AG04450 (cell line): ENCODE measurements at regions of chrX and their contacts with region 1.

Region 1: GRCh38 chrX:19334945-19335626 is 8.6 kb upstream of the PDHA1 start:
- DNase-seq: no peak
- H3K4me3 ChIP-seq: no peak overlapping the region
- H3K27ac ChIP-seq: no peak overlapping the region
- H3K27me3 ChIP-seq: no peaks in the 10 kb centered on the region
- CTCF ChIP-seq: peak; percentile 15; the same call in 1 of the 2 replicates

Region 2: DNA sequence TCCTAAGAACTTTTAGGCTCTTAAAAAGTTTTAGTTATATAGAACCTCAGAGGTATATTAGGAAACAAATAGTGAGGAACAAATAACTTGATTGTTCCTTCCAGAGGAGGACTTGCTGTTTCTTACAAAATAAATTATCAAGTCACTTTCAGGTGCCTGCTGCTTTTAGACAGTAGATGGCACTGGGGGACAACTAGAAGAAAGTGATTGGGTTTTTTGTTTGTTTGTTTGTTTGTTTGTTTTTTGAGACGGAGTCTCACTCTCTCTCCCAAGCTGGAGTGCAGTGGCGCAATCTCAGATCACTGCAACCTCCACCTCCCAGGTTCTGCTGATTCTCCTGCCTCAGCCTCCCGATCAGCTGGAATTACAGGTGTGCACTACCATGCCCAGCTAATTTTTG is 945.1 kb before region 1 on chrX:
- CTCF ChIA-PET with region 1: interaction called, 19 read pairs
- POLR2A ChIA-PET with region 1: no interaction called
- DNase-seq: no peak
- H3K4me3 ChIP-seq: no peak overlapping the region
- H3K27ac ChIP-seq: no peak overlapping the region
- H3K27me3 ChIP-seq: no peaks in the 10 kb centered on the region
- CTCF ChIP-seq: no peak

Region 3: DNA sequence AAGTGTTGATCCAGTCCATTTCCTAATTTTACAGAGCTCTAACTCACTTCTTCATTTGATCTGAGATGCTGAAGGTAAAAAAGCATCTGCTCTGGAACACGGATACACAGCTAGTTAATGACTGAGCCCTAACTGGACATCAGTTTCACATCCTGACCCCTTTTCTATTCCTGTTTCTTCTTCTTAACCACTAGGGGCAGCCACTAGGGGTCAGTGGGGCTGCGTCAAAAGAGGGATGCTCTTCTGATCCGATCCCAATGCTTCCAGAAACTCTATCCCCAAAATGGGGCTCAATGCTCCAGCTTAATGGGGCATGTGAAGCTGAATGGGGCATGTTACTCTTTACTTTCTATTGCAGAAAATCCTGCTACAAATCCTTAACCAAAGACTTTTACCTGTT is 317.8 kb before region 1 on chrX:
- CTCF ChIA-PET with region 1: interaction called, 16 read pairs
- POLR2A ChIA-PET with region 1: no interaction called
- DNase-seq: no peak
- H3K4me3 ChIP-seq: no peak overlapping the region
- H3K27ac ChIP-seq: no peak overlapping the region
- H3K27me3 ChIP-seq: no peaks in the 10 kb centered on the region
- CTCF ChIP-seq: peak; percentile 60

Region 4: DNA sequence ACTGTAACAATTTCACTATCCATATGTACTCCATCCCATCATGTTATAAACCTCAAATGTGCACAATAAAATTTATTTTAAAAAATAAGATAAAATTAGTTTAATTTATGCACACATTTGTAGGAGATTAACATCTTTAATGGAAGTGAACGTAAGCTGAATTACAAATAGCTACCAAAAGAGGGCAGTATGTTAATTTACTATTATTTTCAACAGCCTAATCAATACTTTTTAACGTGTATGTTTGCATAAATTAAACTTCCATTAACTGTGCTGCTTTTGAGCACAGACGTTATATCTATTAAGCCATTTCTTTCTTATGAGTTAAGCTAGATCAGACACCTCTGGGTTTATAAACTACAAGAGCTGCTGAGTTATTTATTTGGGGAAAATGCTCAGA is 294.7 kb before region 1 on chrX:
- CTCF ChIA-PET with region 1: interaction called, 10 read pairs
- POLR2A ChIA-PET with region 1: no interaction called
- DNase-seq: no peak
- H3K4me3 ChIP-seq: no peak overlapping the region
- H3K27ac ChIP-seq: no peak overlapping the region
- H3K27me3 ChIP-seq: no peaks in the 10 kb centered on the region
- CTCF ChIP-seq: peak; percentile 37